Colonic mucosa (tissue), 4 donors: ENCODE measurements at regions of chr12 and their contacts with region 1.

Region 1: GRCh38 chr12:120598674-120599463 is 17.7 kb upstream of the POP5 start:
- DNase-seq: no peak
- H3K4me3 ChIP-seq: no peak overlapping the region
- H3K27ac ChIP-seq: no peak overlapping the region
- H3K4me1 ChIP-seq: no peaks in the 10 kb centered on the region
- H3K27me3 ChIP-seq: no peaks in the 10 kb centered on the region
- CTCF ChIP-seq: no peak

Region 2: GRCh38 chr12:120955232-120955631 is 356.4 kb after region 1 on chr12:
- intact Hi-C with region 1: no loop called
- DNase-seq: no peak
- H3K4me3 ChIP-seq: no peak overlapping the region
- H3K27ac ChIP-seq: no peak overlapping the region
- H3K4me1 ChIP-seq: peaks cover 5% of the 10 kb centered on the region
- H3K27me3 ChIP-seq: no peaks in the 10 kb centered on the region
- CTCF ChIP-seq: no peak

Region 3: DNA sequence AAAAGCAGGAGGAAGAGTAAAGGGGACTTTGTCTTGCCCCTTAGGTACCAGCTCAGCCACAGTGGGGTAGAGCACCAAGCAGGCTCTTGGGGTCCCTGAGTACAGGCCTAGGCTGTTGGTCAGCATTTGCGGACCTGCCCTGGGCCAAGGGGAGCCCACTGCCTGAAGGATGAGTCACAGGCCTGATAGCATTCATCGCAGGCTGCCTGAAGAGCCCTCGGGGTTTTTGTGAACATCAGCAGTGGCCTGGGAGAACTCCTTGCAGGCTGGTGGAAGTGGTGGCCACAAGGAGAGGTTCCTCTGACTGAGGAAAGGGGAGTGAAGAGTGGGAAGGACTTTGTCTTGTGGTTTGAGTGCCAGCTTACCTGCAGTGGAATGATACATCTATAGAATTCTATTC is 508.8 kb after region 1 on chr12:
- intact Hi-C with region 1: loop called (anchors 10 kb)
- DNase-seq: no peak
- H3K4me3 ChIP-seq: no peak overlapping the region
- H3K27ac ChIP-seq: no peak overlapping the region
- H3K4me1 ChIP-seq: no peaks in the 10 kb centered on the region
- H3K27me3 ChIP-seq: no peaks in the 10 kb centered on the region
- CTCF ChIP-seq: no peak